Posterior cingulate gyrus (tissue), 11 donors: ENCODE measurements at regions of chr12 and their contacts with region 1.

Region 1: DNA sequence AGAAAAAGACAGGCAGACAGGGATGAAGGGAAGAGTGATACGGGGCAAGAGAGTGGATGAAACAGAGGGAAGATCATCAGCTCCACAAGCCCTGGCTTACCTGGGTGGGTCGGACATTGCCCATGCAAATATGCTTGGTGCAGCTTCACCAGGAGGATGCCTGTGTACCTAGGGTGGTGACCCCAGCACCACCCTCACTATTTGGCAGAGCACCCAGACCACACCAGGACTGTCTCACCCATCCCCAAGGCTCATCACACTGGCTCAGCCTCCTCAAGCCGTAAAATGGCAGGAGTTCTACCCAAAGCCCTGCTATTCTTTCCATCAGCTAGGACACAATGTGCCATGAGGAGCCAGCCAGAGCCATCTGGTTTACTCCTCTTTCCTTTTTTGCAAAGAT is 3.0 kb downstream of the GALNT8 start:
- DNase-seq: no peak

Region 2: GRCh38 chr12:4701395-4702190 is 21.6 kb before region 1 on chr12:
- intact Hi-C with region 1: loop called (anchors 1 kb)
- DNase-seq: peak in 5 of 10 donors; percentile 9 to 81 (median 67)

Region 3: DNA sequence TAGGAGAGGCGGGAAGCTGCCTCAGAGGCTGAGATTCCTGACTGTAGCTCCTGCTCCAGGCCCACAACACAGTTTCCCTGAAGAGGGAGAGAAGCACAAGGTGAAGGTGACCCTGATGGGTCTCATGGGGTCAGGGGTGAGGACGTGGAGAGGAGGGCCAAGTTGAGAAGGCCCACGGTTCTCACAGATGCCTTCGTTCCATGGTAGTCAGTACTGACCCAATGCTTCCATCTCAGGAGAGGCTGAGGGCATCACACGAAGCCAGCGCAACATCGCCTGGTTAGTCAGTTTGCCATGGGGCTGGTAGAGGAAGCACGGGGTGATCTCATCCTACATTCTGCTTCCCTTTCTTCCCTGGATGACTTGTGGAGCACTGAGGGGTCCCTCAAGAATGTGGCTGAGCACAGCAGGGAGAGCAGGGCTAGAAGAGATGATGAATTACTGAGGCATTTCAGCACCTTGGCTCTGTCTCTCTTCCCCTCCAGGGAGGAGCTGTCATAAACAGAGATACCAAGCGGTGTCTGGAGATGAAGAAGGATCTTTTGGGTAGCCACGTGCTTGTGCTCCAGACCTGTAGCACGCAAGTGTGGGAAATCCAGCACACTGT is 48.8 kb after region 1 on chr12:
- intact Hi-C with region 1: no loop called
- DNase-seq: no peak

Region 4: GRCh38 chr12:4934407-4935035 is 211.3 kb after region 1 on chr12:
- intact Hi-C with region 1: no loop called
- DNase-seq: no peak